ENCODE measurements at regions of chr3 and their contacts with region 1.

Region 1: DNA sequence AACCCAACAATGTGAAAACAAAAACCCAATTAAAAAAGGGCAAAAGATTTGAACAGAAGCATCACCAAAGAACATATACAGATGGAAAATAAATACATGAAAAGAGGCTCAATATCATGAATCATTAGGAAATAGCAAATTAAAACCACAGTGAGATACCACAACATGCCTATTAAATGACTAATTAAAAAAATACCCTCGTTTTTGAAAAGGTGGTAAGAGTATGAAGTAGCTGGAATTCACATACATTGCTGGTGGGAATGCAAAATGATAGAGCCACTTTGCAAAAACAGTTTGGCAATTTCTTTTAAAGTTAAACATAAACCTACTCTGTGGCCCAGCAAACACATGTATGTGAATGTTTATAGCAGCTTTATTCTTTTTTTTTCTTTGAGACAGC is 75.8 kb downstream of the B3GNT5 start:
- DNase-seq: peak; percentile 56
- ATAC-seq: peak; percentile 11
- H3K4me3 ChIP-seq: no peak overlapping the region
- H3K27ac ChIP-seq: peak overlapping the region; percentile 17; the same call in 1 of the 2 replicates
- H3K4me1 ChIP-seq: peaks cover 42% of the 10 kb centered on the region
- H3K27me3 ChIP-seq: no peaks in the 10 kb centered on the region
- CTCF ChIP-seq: no peak

Region 2: DNA sequence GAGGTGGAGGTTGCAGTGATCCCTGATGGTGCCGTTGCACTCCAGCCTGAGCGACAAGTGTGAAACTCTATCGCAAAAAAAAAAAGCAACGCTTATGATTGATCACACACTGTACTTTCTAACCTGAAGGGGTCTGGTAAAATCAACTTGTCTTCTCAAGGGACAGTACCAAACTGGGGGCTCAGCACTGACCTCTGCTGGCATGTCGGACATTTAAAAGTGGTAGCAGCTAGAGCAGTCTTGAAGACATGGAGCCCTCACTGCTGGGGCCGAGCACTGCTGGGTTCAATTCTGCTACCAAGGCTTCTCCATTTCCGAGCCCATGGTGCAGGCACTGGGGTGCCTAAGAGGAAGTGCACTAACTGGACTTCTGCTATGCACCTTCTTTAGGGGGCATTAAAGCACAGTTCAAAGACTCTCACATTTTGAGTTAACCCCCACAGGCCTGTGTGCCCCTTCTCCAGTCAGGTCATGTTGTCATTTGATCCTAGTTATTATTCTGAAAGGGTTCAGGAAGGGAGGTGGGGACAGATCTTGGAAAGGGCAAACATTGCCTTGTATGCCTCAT is 139.8 kb before region 1 on chr3:
- CTCF ChIA-PET with region 1: no interaction called
- POLR2A ChIA-PET with region 1: interaction called, 14 read pairs
- intact Hi-C with region 1: loop called (anchors 2 kb)
- DNase-seq: peak; percentile 48
- ATAC-seq: no peak
- H3K4me3 ChIP-seq: no peak overlapping the region
- H3K27ac ChIP-seq: no peak overlapping the region
- H3K4me1 ChIP-seq: peaks cover 37% of the 10 kb centered on the region
- H3K27me3 ChIP-seq: no peaks in the 10 kb centered on the region
- CTCF ChIP-seq: peak; percentile 56

Region 3: GRCh38 chr3:183339461-183340079 is 10.7 kb after region 1 on chr3:
- CTCF ChIA-PET with region 1: no interaction called
- POLR2A ChIA-PET with region 1: no interaction called
- intact Hi-C with region 1: no loop called
- DNase-seq: no peak
- ATAC-seq: no peak
- H3K4me3 ChIP-seq: no peak overlapping the region
- H3K27ac ChIP-seq: no peak overlapping the region
- H3K4me1 ChIP-seq: no peaks in the 10 kb centered on the region
- H3K27me3 ChIP-seq: no peaks in the 10 kb centered on the region
- CTCF ChIP-seq: no peak

Measured in PC-3 (cell line).